Aorta (tissue), 5 donors: ENCODE measurements at regions of chr5 and their contacts with region 1.

Region 1: DNA sequence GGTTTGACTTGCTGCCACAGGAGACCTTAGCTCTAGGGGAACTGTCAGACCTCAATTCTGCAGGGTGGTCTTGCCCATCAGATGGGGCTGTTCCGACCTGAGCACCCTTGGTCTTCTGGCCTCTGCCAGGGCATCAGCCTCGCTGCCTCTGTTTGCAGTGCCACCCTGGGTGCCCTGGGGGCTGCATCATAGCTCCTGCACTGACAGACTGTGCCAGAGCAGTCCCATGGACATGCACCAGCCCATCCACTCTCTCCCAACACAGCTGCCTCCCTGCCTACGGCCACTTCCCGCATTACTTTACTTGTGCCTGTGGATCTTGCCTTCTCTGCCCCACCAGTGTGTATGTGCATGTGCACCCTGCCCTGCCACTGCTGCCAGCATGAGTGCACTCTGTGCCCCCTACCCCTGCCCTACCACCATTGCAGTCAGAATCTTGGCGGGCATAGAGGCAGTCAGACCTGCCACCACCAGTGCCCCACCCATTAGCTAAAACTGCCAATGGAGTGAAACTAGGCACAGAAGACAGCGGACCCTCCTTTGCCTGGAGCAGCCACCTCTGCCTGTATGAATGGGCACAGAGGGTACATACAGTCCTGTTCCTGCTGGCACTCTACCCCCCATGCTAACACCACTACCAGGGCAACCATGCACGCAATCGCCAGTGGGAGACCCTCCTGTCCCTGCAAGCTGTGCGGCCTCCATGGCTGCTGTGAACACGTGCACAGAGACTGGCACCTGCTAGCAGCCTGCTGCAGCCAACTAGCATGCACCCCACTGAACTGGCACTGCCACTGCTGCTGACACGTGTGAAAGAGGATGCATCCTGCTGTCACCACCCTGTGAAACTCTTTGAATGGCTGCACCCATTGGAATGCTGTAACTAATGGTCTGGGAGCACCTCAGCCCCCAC is 885.0 kb upstream of the ARRDC3 start:
- DNase-seq: no peak
- ATAC-seq: peak; percentile 56
- H3K4me3 ChIP-seq: no peak overlapping the region
- H3K27ac ChIP-seq: no peak overlapping the region
- H3K4me1 ChIP-seq: no peaks in the 10 kb centered on the region
- H3K27me3 ChIP-seq: no peaks in the 10 kb centered on the region

Region 2: GRCh38 chr5:92283521-92283920 is 15.4 kb after region 1 on chr5:
- intact Hi-C with region 1: loop called in 1 of 2 experiments (anchors 1 kb)
- DNase-seq: no peak
- ATAC-seq: no peak
- H3K4me3 ChIP-seq: no peak overlapping the region
- H3K27ac ChIP-seq: no peak overlapping the region
- H3K4me1 ChIP-seq: no peaks in the 10 kb centered on the region
- H3K27me3 ChIP-seq: no peaks in the 10 kb centered on the region

Region 3: DNA sequence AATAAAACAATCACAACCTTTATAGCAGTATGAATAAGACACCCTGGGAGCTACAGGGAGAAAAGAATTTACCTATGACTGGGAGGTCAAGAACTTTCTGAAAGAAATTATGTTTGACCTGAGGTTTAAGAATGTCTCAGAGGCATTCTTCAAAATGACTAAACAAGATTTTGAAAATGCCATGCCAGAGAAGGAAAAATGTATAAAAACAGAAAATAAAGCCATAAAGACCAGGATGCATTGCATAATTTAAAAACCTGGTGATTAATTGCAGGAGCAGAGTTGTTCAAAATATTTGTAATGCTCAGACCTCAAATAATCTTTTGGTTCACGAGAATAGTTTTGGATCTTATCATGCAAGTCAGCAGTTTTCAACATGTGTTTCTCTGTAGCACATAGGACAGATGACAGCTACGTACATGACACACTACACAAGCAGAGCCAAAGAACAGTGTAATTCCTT is 69.7 kb after region 1 on chr5:
- intact Hi-C with region 1: no loop called
- DNase-seq: no peak
- ATAC-seq: no peak
- H3K4me3 ChIP-seq: no peak overlapping the region
- H3K27ac ChIP-seq: no peak overlapping the region
- H3K4me1 ChIP-seq: no peaks in the 10 kb centered on the region
- H3K27me3 ChIP-seq: no peaks in the 10 kb centered on the region